ENCODE measurements at regions of chr10 and their contacts with region 1.

Region 1: DNA sequence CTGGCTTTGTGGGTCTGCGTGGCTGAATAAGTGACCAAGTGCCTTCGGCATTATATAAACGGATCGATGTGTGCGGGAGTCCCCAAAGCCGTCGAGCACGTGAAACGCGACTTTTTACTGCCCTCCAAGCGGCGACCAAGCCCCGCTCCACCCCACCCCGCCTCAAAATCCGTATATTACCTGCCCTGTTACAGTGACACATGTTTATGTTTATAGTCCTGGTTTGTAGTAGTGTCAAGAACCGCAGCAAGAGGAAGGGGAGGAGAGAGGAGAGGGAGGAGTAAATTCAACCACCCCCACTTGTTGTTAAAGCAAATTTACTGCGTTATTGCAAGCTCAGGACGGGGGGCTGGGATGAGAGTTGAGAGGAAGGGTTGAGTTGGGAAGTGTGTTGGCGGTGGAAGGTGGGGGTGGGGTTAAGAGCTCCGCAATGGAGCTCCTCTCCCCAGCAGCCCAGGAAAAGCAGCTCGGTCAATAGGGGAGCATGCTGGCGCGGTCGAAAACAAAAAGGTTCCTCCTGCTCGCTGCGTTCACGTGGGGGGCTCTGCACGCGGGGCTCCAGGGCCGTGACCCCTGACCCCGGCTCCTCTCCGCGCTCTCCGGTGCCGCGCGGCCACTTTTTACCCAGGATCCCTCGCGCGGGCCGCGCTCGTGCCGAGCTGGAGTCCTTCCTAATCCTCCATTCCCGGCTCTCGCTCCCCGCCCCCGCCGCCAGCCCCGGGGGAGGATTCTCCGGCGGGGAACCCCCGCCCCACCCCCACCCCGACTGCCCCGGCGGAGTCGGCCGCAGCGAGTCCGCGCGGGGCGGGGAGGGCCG is at the start of gene SKIDA1:
- DNase-seq: peak; percentile 69
- ATAC-seq: peak; percentile 65
- H3K4me3 ChIP-seq: peak within 1 kb of the TSS; percentile 60 to 73 (median 64)
- H3K4me3 Mint-ChIP-seq: peak within 1 kb of the TSS; percentile 89
- H3K27ac ChIP-seq: peak within 1 kb of the TSS; percentile 31 to 52
- H3K27ac Mint-ChIP-seq: peak within 1 kb of the TSS; percentile 91
- H3K4me1 ChIP-seq: peaks cover 24 to 37% of the 10 kb centered on the region in 2 donors
- H3K4me1 Mint-ChIP-seq: peaks cover 25% of the 10 kb centered on the region
- H3K27me3 ChIP-seq: peaks cover 0 to 52% (median 46%) of the 10 kb centered on the region in 4 experiments
- H3K27me3 Mint-ChIP-seq: peaks cover 59% of the 10 kb centered on the region
- CTCF ChIP-seq: no peak
- total RNA-seq, gene SKIDA1: 0.10 TPM in 1 of 2 replicates, not detected in the other

Region 2: GRCh38 chr10:21668831-21669230 is 143.3 kb after region 1 on chr10:
- CTCF ChIA-PET with region 1: no interaction called
- POLR2A ChIA-PET with region 1: interaction called, 14 read pairs
- intact Hi-C with region 1: no loop called
- DNase-seq: no peak
- ATAC-seq: no peak
- H3K4me3 ChIP-seq: no peak overlapping the region
- H3K4me3 Mint-ChIP-seq: no peak overlapping the region
- H3K27ac ChIP-seq: no peak overlapping the region
- H3K27ac Mint-ChIP-seq: no peak overlapping the region
- H3K4me1 ChIP-seq: peaks cover 3 to 10% of the 10 kb centered on the region in 2 donors
- H3K4me1 Mint-ChIP-seq: peaks cover 19% of the 10 kb centered on the region
- H3K27me3 ChIP-seq: no peaks in the 10 kb centered on the region
- H3K27me3 Mint-ChIP-seq: no peaks in the 10 kb centered on the region
- CTCF ChIP-seq: no peak